ENCODE measurements at regions of chr10 and their contacts with region 1.

Region 1: GRCh38 chr10:69123747-69124562 is at the start of gene VPS26A:
- DNase-seq: peak; percentile 99 to 100 (median 100)

Region 2: GRCh38 chr10:68955832-68956532 is 168.0 kb before region 1 on chr10 and contains the start of gene DDX21:
- intact Hi-C with region 1: loop called (anchors 1 kb)
- DNase-seq: peak; percentile 87 to 99 (median 95)

Region 3: GRCh38 chr10:69179743-69180524 is 56.0 kb after region 1 on chr10 and contains the start of gene SUPV3L1:
- intact Hi-C with region 1: loop called (anchors 1 kb)
- DNase-seq: peak; percentile 86 to 99 (median 94)

Region 4: DNA sequence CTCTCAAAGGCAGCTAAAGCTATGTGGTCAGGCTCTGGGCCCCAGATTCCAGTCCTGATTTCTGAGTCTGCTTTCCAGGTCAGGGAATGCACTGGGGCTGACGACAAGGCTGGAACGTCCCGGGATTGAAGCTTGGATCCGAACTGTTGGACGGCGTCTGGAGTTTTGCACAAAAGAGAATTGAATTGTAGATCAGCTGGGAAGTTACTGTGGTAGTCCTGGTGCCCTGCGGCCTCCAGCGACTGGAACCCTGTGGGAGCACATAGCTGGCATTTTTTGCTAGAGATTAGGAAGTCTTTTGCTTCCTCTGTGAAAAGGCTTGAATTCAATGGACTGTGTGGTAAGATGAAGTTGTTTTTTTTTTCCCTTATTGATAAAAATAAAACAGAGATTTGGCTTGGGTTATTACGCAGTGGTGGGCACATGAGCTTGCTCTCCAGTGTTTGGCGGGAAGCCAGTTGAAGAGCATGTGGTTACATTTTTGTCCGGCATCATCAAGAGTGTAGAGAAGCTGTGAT is 154.6 kb after region 1 on chr10 and contains the start of gene HK1:
- intact Hi-C with region 1: no loop called
- DNase-seq: peak in 1 of 10 donors; percentile 65

Region 5: GRCh38 chr10:69364232-69364940 is 240.4 kb after region 1 on chr10:
- intact Hi-C with region 1: no loop called
- DNase-seq: no peak

Measured in posterior cingulate gyrus (tissue), 11 donors.